BJ (cell line): ENCODE measurements at regions of chr10 and their contacts with region 1.

Region 1: GRCh38 chr10:100481462-100482081 is 18.8 kb downstream of the WNT8B start:
- DNase-seq: peak; percentile 52
- H3K4me3 ChIP-seq: peak overlapping the region; percentile 21
- H3K27me3 ChIP-seq: peaks cover 18% of the 10 kb centered on the region
- CTCF ChIP-seq: no peak

Region 2: GRCh38 chr10:100470367-100470766 is 11.2 kb before region 1 on chr10:
- CTCF ChIA-PET with region 1: interaction called, 22 read pairs
- POLR2A ChIA-PET with region 1: no interaction called
- DNase-seq: no peak
- H3K4me3 ChIP-seq: no peak overlapping the region
- H3K27me3 ChIP-seq: peaks cover 2% of the 10 kb centered on the region
- CTCF ChIP-seq: no peak

Region 3: DNA sequence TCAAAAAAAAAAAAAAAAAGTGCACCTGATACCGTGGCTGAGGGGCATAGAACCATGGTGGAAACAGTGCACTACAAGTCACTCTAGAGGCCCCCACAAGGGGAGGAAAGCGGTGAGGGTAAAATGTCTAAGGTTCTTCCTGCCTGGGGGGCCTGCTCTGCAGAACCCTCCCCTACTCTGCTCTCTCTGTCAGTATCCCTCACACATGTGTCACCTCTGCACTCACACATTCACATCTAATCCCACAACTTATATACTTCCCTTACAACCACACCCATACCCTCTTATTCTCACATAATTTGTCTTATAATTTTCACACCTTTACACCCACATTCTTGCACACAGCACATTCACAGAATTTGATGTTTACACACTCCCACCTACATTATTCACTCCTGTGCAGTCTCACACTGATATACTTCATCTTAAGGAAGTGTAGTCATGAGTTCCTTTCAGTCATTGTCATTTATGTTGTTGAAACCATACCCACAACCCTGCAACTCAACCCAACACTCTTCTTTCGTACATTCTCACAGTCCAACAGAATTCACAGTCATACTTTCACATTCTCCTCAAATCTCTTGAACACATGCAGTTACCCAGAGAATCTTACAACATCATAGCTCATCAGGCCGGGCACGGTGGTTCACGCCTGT is 195.8 kb after region 1 on chr10:
- CTCF ChIA-PET with region 1: no interaction called
- POLR2A ChIA-PET with region 1: no interaction called
- DNase-seq: no peak
- H3K4me3 ChIP-seq: no peak overlapping the region
- H3K27me3 ChIP-seq: peaks cover 6% of the 10 kb centered on the region
- CTCF ChIP-seq: no peak

Region 4: DNA sequence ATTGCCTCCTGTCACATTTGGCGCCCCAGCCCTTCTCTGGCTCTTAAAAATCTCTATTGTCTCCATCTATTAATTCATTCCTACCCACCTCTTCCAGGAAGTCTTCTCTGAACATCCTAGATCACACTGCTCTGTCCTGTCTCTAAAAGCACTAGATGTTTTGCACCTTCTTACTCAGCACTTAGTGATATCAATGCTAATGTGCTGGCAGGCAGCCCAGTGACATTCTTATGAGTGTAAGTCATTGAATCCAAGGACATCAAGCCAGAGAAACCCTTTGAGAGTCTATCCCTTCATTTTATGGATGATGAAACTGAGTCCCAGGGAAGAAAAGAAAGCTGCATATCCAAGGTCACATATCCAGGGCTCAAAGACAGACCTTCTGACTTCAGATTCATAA is 215.5 kb after region 1 on chr10:
- CTCF ChIA-PET with region 1: no interaction called
- POLR2A ChIA-PET with region 1: no interaction called
- DNase-seq: no peak
- H3K4me3 ChIP-seq: no peak overlapping the region
- H3K27me3 ChIP-seq: peaks cover 2% of the 10 kb centered on the region
- CTCF ChIP-seq: no peak